WTC11 (cell line): ENCODE measurements at regions of chr22 and their contacts with region 1.

Region 1: GRCh38 chr22:22195265-22196017 is 49.1 kb upstream of the VPREB1 start:
- DNase-seq: peak; percentile 96
- ATAC-seq: peak; percentile 100
- H3K4me3 Mint-ChIP-seq: no peak overlapping the region
- H3K27ac Mint-ChIP-seq: no peak overlapping the region
- H3K4me1 Mint-ChIP-seq: no peaks in the 10 kb centered on the region
- H3K27me3 Mint-ChIP-seq: peaks cover 100% of the 10 kb centered on the region
- CTCF ChIP-seq: peak; percentile 93

Region 2: GRCh38 chr22:21996175-21996720 is 199.2 kb before region 1 on chr22:
- CTCF ChIA-PET with region 1: no interaction called
- POLR2A ChIA-PET with region 1: no interaction called
- DNase-seq: no peak
- ATAC-seq: no peak
- H3K4me3 Mint-ChIP-seq: no peak overlapping the region
- H3K27ac Mint-ChIP-seq: no peak overlapping the region
- H3K4me1 Mint-ChIP-seq: no peaks in the 10 kb centered on the region
- H3K27me3 Mint-ChIP-seq: peaks cover 100% of the 10 kb centered on the region
- CTCF ChIP-seq: no peak

Region 3: DNA sequence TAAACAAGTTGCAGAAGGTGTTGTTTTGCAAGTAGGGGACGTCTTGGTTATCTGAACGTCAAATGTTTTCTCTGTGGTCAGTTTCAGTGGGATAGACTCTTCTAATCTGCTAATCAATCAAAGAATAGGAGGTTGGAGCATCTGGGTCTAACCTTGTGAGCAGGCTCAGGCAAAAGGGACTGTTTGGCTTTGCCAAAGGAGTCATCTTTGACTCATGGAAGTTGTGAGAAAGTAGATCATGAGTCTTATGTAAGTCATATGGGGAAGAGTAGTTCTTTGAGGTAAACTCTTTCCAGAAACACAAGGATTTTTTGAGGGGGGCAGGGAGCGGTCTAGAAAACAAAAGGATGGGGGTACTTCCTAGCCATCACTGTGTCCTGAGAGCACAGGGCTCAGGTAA is 185.8 kb before region 1 on chr22:
- CTCF ChIA-PET with region 1: no interaction called
- POLR2A ChIA-PET with region 1: no interaction called
- DNase-seq: no peak
- ATAC-seq: no peak
- H3K4me3 Mint-ChIP-seq: no peak overlapping the region
- H3K27ac Mint-ChIP-seq: no peak overlapping the region
- H3K4me1 Mint-ChIP-seq: peaks cover 5% of the 10 kb centered on the region
- H3K27me3 Mint-ChIP-seq: peaks cover 94% of the 10 kb centered on the region
- CTCF ChIP-seq: no peak

Region 4: GRCh38 chr22:22180738-22181285 is 14.6 kb before region 1 on chr22:
- CTCF ChIA-PET with region 1: interaction called, 36 read pairs
- POLR2A ChIA-PET with region 1: no interaction called
- DNase-seq: no peak
- ATAC-seq: no peak
- H3K4me3 Mint-ChIP-seq: no peak overlapping the region
- H3K27ac Mint-ChIP-seq: no peak overlapping the region
- H3K4me1 Mint-ChIP-seq: peaks cover 7% of the 10 kb centered on the region
- H3K27me3 Mint-ChIP-seq: peaks cover 100% of the 10 kb centered on the region
- CTCF ChIP-seq: no peak

Region 5: GRCh38 chr22:22207845-22208564 is 12.6 kb after region 1 on chr22:
- CTCF ChIA-PET with region 1: interaction called, 19 read pairs
- POLR2A ChIA-PET with region 1: interaction called, 7 read pairs
- DNase-seq: peak; percentile 86
- ATAC-seq: peak; percentile 90
- H3K4me3 Mint-ChIP-seq: no peak overlapping the region
- H3K27ac Mint-ChIP-seq: no peak overlapping the region
- H3K4me1 Mint-ChIP-seq: no peaks in the 10 kb centered on the region
- H3K27me3 Mint-ChIP-seq: peaks cover 96% of the 10 kb centered on the region
- CTCF ChIP-seq: peak; percentile 43

Region 6: DNA sequence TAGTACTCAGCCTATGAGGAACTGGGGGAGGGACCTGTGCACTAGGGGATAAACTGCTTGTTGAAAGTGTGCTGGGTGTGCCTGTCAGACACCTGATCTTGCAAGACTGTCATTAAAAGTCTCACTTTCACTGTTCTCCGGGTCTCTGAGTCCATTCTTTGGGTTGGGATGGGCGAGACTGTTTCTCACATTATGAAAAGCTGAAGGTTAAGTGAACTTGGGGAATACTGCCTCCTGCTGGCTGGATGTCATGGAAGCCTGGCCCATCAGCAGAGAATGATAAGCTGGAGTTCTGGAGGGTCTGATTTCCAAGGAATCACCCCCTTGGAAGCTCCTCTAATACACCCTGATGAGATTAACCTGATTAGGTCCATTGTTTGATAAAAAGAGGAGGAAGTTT is 40.1 kb after region 1 on chr22:
- CTCF ChIA-PET with region 1: interaction called, 21 read pairs
- POLR2A ChIA-PET with region 1: no interaction called
- DNase-seq: peak; percentile 57
- ATAC-seq: no peak
- H3K4me3 Mint-ChIP-seq: no peak overlapping the region
- H3K27ac Mint-ChIP-seq: no peak overlapping the region
- H3K4me1 Mint-ChIP-seq: no peaks in the 10 kb centered on the region
- H3K27me3 Mint-ChIP-seq: peaks cover 100% of the 10 kb centered on the region
- CTCF ChIP-seq: peak; percentile 44